ENCODE measurements at regions of chr7 and their contacts with region 1.

Region 1: DNA sequence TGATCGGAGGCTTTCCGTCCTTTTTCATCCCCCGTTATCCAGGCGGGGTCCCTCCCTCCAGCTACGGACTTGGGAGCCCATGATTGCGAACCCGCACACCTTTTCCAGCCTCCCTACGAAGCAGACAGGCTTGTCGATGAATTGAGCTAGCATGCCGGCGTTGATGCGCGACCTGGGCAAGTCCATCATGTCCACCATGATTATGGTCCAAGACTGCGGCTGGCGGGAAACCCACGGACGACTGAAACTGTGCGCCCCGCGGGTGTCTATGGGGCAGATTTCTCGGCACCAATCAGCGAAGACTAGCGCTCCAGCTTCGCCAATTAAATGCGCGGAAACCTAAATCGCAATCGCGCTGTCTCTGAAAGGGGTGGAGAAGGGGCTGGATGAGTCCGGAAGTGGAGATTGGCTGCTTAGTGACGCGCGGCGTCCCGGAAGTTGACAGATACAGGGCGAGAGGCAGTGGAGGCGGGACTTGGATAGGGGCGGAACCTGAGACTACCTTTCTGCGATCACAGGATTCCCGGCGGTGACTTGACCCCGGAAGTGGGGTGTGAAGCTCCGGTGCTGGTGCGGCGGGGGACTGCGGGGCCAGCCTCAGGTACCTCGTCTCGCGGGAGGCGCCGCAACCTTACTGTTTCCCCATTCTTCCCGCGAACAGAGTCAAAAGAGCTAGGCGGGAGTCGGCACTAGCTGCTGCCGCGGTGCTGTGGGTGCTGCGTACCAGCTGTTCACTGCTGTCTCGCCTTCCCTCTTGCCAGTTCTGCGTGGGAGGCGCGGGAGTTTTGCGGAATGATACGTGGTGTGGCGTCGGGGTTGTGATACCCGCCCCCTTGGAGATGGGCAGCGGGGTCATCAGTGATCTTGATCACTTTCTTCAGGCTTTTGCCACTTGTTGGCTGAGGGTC is at the start of gene UMAD1:
- DNase-seq: peak; percentile 97 to 99 (median 98)
- ATAC-seq: peak; percentile 100
- H3K4me3 ChIP-seq: peak within 1 kb of the TSS; percentile 65 to 91 (median 83)
- H3K27ac ChIP-seq: peak within 1 kb of the TSS; percentile 4 to 93 (median 85)
- H3K4me1 ChIP-seq: peaks cover 0 to 22% (median 16%) of the 10 kb centered on the region in 12 donors
- H3K27me3 ChIP-seq: no peaks in the 10 kb centered on the region
- CTCF ChIP-seq: no peak
- POLR2A ChIP-seq: peak in 1 of 2 donors; percentile 65
- total RNA-seq, gene UMAD1: 10.1 to 19.7 (median 15.6) TPM

Region 2: GRCh38 chr7:7529328-7529727 is 111.1 kb before region 1 on chr7:
- intact Hi-C with region 1: no loop called
- DNase-seq: no peak
- ATAC-seq: no peak
- H3K4me3 ChIP-seq: no peak overlapping the region
- H3K27ac ChIP-seq: no peak overlapping the region
- H3K4me1 ChIP-seq: no peaks in the 10 kb centered on the region
- H3K27me3 ChIP-seq: no peaks in the 10 kb centered on the region
- CTCF ChIP-seq: no peak
- POLR2A ChIP-seq: no peak

Region 3: GRCh38 chr7:7566651-7567611 is 73.5 kb before region 1 on chr7 and contains the start of gene MIOS:
- intact Hi-C with region 1: loop called in 1 of 10 experiments (anchors 10 kb)
- DNase-seq: peak; percentile 90 to 95 (median 93)
- ATAC-seq: peak; percentile 95 to 99 (median 98)
- H3K4me3 ChIP-seq: peak within 1 kb of the TSS; percentile 72 to 97 (median 86)
- H3K27ac ChIP-seq: peak within 1 kb of the TSS; percentile 82 to 97 (median 93)
- H3K4me1 ChIP-seq: peaks cover 0 to 45% (median 19%) of the 10 kb centered on the region in 12 donors
- H3K27me3 ChIP-seq: no peaks in the 10 kb centered on the region
- CTCF ChIP-seq: peak in 1 of 12 donors; percentile 8
- POLR2A ChIP-seq: peak; percentile 21 to 85
- total RNA-seq, gene MIOS: 21.0 to 30.8 (median 22.3) TPM

Region 4: DNA sequence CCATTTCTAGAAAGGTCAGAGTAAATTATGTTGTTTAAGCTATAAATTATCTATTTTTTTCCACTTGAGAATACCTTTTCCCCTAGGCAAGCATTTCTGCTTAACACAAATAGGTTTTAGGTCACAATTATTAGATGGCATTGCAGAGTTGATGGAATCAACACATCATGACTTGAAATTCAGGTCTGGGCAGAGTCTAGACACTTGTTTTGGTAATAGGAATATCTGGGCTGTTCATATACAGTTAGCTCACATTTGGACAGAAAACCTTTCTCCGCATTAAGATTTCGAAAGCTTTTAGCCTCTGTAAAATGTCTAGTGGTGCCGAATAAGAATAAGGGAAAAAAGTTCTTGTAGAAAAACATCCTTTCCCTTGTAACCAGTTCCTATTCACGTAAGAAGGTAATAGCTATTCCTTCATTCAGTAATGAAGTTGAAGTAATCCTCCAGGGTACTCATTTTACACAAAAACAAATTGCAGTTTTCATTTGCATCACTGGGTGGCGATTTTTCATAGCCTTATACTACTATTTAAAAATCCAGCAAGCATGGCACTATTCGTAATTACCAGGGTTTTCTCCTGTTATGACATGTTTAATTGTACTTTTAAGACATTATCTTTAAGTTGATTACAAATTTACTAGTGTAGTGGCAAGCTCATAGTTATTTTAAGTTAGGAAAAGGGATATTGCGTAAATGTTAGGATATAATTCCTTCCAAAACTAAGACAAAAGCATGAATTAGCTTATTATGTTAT is 40.9 kb after region 1 on chr7:
- intact Hi-C with region 1: loop called in 1 of 10 experiments (anchors 2 kb)
- DNase-seq: peak in 2 of 5 donors; percentile 61
- ATAC-seq: peak in 3 of 4 donors; percentile 77 to 91 (median 89)
- H3K4me3 ChIP-seq: peak overlapping the region in 4 of 12 donors; percentile 12 to 34 (median 15)
- H3K27ac ChIP-seq: peak overlapping the region; percentile 3 to 69 (median 35)
- H3K4me1 ChIP-seq: peaks cover 0 to 30% (median 21%) of the 10 kb centered on the region in 12 donors
- H3K27me3 ChIP-seq: no peaks in the 10 kb centered on the region
- CTCF ChIP-seq: peak; percentile 47 to 82 (median 71)
- POLR2A ChIP-seq: no peak

Region 5: GRCh38 chr7:7696458-7697119 is 56.1 kb after region 1 on chr7:
- intact Hi-C with region 1: no loop called
- DNase-seq: no peak
- ATAC-seq: peak in 2 of 4 donors; percentile 45 to 56
- H3K4me3 ChIP-seq: no peak overlapping the region
- H3K27ac ChIP-seq: peak overlapping the region; percentile 15 to 79 (median 62)
- H3K4me1 ChIP-seq: peaks cover 0 to 68% (median 48%) of the 10 kb centered on the region in 12 donors
- H3K27me3 ChIP-seq: no peaks in the 10 kb centered on the region
- CTCF ChIP-seq: no peak
- POLR2A ChIP-seq: no peak

Region 6: DNA sequence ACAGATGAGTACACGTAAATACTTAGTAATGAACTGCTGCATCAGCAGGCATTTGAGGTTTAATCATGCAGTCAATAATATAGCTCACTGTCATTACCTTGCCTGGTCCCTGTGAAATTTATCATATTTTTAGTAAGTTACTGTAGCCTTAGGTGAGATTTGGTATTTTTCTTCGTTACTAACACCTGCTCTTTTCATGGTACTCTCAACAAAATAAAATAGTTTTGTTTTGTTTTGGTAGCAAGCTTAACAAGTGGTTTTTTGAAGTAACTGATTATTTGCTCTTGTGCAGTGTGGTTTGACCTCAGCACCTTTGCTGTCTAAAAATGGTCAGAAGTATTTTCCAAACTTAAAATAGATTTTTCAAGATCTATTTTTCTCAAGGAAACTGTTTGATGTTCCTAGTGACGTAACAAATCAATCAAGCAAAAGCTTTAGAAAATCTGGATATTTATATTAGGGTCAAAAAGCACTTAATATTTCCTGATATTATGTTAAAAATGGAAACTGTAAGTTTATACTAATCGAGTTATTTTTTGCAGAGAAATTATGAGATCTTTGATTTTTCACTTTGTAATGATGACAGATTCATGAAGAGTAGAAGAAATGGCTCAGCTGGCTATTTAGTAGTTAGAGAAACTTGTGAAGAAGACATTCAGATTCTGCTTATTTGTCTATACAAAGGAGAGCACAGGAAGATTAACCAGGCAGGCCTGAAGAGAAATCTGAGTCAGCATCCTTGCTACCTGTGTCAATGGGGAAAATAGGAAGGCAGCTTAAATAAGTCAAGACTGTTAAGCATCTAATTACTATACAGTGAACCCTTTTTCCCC is 98.9 kb after region 1 on chr7:
- intact Hi-C with region 1: no loop called
- DNase-seq: no peak
- ATAC-seq: no peak
- H3K4me3 ChIP-seq: no peak overlapping the region
- H3K27ac ChIP-seq: no peak overlapping the region
- H3K4me1 ChIP-seq: peaks cover 0 to 18% (median 0%) of the 10 kb centered on the region in 12 donors
- H3K27me3 ChIP-seq: no peaks in the 10 kb centered on the region
- CTCF ChIP-seq: no peak
- POLR2A ChIP-seq: no peak

Region 7: DNA sequence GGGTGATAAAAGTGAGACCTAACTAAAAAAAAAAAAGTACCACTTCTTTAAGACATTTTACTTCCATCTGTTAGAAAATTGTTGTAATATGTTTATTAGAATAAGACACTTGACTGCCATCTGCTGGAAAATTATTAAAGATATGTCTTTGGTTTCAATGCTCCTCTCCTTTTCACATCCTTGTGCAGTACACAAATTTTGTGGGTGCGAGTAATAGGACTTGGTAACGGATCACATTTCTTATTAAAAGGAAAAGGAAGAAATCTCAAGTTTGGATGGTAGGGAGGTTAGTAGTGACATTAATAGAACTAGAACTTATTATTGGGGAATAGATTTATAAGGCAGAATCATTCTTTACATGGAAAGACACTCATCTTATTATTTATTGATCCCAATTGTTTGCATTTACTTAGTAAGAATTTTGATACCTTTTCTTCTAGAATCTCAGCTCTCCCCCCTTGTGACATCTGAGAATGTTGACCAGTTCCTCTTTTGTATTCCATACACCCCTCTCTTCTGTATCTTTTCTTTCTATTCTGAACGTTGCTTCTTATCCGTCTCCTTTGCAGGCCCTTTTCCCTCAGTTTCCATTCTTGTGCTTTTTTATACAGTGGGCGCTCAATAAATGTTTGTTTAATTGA is 121.0 kb after region 1 on chr7:
- intact Hi-C with region 1: loop called in 1 of 10 experiments (anchors 5 kb)
- DNase-seq: no peak
- ATAC-seq: peak; percentile 33 to 66 (median 52)
- H3K4me3 ChIP-seq: peak overlapping the region in 10 of 12 donors; percentile 39 to 61 (median 52)
- H3K27ac ChIP-seq: peak overlapping the region in 11 of 12 donors; percentile 9 to 80 (median 68)
- H3K4me1 ChIP-seq: peaks cover 0 to 17% (median 8%) of the 10 kb centered on the region in 12 donors
- H3K27me3 ChIP-seq: no peaks in the 10 kb centered on the region
- CTCF ChIP-seq: peak; percentile 36 to 67 (median 54)
- POLR2A ChIP-seq: no peak